ENCODE measurements at regions of chr19 and their contacts with region 1.

Region 1: GRCh38 chr19:49443366-49444099 is 2.2 kb upstream of the SLC17A7 start:
- DNase-seq: peak; percentile 97
- ATAC-seq: peak; percentile 91
- H3K4me3 Mint-ChIP-seq: peak overlapping the region; percentile 73
- H3K27ac Mint-ChIP-seq: peak overlapping the region; percentile 83
- H3K4me1 Mint-ChIP-seq: peaks cover 33% of the 10 kb centered on the region
- H3K27me3 Mint-ChIP-seq: peaks cover 37% of the 10 kb centered on the region

Region 2: GRCh38 chr19:48738557-48739399 is 704.8 kb before region 1 on chr19:
- CTCF ChIA-PET with region 1: no interaction called
- POLR2A ChIA-PET with region 1: no interaction called
- intact Hi-C with region 1: loop called in 1 of 2 experiments (anchors 2 kb)
- DNase-seq: peak; percentile 99
- ATAC-seq: peak; percentile 96
- H3K4me3 Mint-ChIP-seq: peak overlapping the region; percentile 51
- H3K27ac Mint-ChIP-seq: peak overlapping the region; percentile 51
- H3K4me1 Mint-ChIP-seq: peaks cover 17% of the 10 kb centered on the region
- H3K27me3 Mint-ChIP-seq: peaks cover 3% of the 10 kb centered on the region

Region 3: DNA sequence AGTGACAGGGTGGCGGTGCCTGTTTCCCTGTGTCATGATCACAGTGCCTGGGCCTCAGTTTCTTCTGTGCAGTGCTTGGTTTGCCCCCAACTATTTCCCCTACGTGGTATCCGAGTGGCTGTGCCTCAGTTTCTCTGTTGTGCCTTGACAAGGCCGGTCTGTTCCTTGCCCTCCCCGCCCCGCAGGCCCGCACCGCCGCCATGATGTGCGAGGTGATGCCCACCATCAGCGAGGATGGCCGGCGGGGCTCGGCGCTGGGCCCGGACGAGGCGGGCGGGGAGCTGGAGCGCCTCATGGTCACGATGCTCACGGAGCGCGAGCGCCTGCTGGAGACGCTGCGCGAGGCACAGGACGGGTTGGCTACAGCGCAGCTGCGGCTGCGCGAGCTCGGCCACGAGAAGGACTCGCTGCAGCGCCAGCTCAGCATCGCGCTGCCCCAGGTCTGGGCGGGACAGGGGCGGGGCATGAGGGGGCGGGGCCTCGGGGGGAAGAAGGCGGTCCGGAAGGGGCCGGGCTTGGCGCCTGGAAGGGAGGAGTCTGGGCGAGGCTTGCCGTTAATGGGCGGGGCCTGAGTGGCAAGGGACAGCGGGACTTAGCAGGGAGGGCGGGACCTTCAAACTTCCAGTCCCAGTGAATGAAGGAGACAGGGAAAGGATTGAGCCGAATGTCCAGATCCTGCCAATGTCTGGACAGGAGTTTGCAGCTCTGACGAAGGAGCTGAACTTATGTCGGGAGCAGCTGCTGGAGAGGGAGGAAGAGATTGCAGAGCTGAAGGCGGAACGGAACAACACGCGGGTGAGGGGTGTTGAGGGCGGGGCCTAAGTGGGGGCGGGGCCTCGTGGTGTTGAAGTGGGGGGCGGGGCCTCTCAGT is 315.6 kb before region 1 on chr19:
- CTCF ChIA-PET with region 1: no interaction called
- POLR2A ChIA-PET with region 1: no interaction called
- intact Hi-C with region 1: loop called in 1 of 2 experiments (anchors 1 kb)
- DNase-seq: peak; percentile 98
- ATAC-seq: peak; percentile 95
- H3K4me3 Mint-ChIP-seq: peak overlapping the region; percentile 76
- H3K27ac Mint-ChIP-seq: peak overlapping the region; percentile 92
- H3K4me1 Mint-ChIP-seq: peaks cover 11% of the 10 kb centered on the region
- H3K27me3 Mint-ChIP-seq: no peaks in the 10 kb centered on the region

Region 4: GRCh38 chr19:49331616-49332055 is 111.9 kb before region 1 on chr19:
- CTCF ChIA-PET with region 1: no interaction called
- POLR2A ChIA-PET with region 1: no interaction called
- intact Hi-C with region 1: loop called in 1 of 2 experiments (anchors 1 kb)
- DNase-seq: peak; percentile 80
- ATAC-seq: peak; percentile 80
- H3K4me3 Mint-ChIP-seq: peak overlapping the region; percentile 33
- H3K27ac Mint-ChIP-seq: peak overlapping the region; percentile 75
- H3K4me1 Mint-ChIP-seq: peaks cover 81% of the 10 kb centered on the region
- H3K27me3 Mint-ChIP-seq: no peaks in the 10 kb centered on the region

Region 5: DNA sequence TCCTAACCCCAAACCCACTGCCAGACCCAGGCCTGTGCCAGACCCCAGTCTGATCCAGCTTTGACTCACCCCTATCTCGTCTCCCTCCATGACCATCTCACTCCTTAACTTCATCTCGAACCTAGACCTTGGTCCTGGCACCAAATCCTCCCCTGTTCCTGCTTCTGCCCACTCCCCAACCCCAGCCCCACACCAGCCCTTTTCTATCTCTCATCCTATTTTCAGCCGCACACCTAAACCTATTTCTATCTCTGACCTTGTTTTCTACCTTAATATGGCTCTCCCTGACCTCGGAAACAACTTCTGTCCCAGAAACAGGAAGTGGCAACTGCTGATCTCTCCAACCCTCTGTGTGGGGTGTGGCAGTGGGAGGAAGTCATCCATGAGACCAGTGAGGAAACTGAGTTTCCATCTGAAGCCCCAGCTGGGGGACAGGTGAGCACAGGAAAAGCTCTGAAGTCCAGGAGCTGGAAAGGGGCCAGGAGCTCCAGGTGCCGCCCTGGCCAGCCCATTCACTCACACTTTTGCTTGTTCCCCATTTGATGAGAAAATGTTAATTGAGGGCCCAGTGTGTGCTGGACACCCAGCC is 34.0 kb before region 1 on chr19:
- CTCF ChIA-PET with region 1: interaction called, 3 read pairs
- POLR2A ChIA-PET with region 1: no interaction called
- intact Hi-C with region 1: loop called in 1 of 2 experiments (anchors 5 kb)
- DNase-seq: no peak
- ATAC-seq: peak; percentile 60
- H3K4me3 Mint-ChIP-seq: peak overlapping the region; percentile 17
- H3K27ac Mint-ChIP-seq: peak overlapping the region; percentile 83
- H3K4me1 Mint-ChIP-seq: peaks cover 60% of the 10 kb centered on the region
- H3K27me3 Mint-ChIP-seq: no peaks in the 10 kb centered on the region

Region 6: DNA sequence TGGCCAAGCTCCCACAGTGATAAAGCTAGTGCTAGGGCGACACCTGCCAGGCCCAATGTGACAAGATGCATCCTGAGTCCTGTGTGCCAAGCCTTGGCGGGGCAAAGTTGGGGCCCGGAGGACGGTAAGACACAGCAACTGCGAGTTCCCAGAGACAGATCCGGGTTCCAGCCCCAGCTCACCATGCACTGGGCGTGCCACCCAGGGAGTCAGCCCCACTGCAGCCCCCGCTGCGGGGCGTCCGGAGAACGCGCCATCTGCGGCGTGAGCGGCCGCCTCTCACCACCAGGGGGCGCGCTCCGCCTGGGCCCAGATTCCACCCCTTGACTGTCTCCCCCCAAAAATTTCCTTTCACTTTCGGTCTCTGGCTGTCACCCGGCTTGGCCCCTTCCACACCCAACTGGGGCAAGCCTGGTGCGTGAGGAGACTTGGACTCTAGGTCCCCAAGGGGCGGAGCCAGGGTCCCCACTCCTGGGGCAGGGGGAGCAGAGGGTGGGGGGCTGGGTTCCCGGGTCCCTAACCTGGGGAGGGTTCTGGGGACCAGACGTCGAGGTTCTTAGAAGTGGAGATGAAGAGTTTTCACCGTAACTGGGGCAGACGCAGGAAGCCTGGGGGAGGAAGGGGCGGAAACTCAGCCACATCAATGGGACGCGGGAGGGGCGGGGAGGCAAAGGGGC is 30.5 kb after region 1 on chr19 and contains the start of gene FLT3LG:
- CTCF ChIA-PET with region 1: interaction called, 7 read pairs
- POLR2A ChIA-PET with region 1: no interaction called
- intact Hi-C with region 1: loop called (anchors 1 kb)
- DNase-seq: peak; percentile 94
- ATAC-seq: peak; percentile 47
- H3K4me3 Mint-ChIP-seq: peak within 1 kb of the TSS; percentile 73
- H3K27ac Mint-ChIP-seq: peak within 1 kb of the TSS; percentile 84
- H3K4me1 Mint-ChIP-seq: peaks cover 58% of the 10 kb centered on the region
- H3K27me3 Mint-ChIP-seq: no peaks in the 10 kb centered on the region
- total RNA-seq, gene FLT3LG: 38.6 to 43.2 TPM